Tibial artery (tissue), 4 donors: ENCODE measurements at regions of chr12 and their contacts with region 1.

Region 1: DNA sequence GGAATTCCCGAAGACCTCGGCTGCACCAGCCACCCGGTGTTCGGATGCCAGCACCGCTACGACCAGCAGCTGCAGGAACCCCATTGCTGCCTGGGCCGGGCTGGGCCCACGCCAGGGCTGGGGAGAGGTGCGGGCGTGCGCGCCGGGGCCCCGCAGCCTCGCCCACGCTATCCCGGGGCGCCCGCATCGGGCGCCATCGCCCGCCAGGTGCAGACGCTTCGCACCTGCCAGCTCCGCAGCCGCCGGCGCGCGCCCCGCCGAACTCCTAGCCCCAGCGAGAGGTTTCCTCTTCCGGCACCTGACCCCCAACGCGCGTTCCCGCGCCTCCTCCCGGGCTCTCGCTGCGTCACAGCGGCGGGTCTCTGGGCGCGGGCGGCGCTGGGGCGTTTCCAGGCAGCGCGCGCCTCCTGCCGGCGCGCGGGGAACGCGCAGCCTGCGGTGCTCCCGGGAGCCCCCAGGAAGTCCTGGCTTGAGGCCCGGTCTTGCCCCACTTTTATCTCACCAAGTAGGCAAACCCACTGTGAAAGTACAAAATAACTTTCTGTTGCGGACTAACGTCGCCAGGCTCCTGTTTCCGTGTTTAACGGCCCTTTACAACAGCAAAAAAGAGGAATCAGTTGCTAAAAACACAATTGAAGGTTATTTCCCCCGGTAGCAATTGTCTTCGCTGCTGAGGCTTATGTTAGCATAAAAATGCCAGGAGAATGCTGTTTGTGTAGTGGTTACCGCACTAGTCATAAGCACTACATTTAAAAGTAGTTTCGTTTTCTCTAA is at the start of gene TM7SF3:
- DNase-seq: peak; percentile 94 to 95
- H3K4me3 ChIP-seq: peak within 1 kb of the TSS; percentile 81 to 88
- H3K27ac ChIP-seq: peak within 1 kb of the TSS; percentile 86 to 90
- H3K4me1 ChIP-seq: peaks cover 4 to 54% (median 31%) of the 10 kb centered on the region in 4 donors
- H3K27me3 ChIP-seq: no peaks in the 10 kb centered on the region
- CTCF ChIP-seq: peak; percentile 96 to 97

Region 2: DNA sequence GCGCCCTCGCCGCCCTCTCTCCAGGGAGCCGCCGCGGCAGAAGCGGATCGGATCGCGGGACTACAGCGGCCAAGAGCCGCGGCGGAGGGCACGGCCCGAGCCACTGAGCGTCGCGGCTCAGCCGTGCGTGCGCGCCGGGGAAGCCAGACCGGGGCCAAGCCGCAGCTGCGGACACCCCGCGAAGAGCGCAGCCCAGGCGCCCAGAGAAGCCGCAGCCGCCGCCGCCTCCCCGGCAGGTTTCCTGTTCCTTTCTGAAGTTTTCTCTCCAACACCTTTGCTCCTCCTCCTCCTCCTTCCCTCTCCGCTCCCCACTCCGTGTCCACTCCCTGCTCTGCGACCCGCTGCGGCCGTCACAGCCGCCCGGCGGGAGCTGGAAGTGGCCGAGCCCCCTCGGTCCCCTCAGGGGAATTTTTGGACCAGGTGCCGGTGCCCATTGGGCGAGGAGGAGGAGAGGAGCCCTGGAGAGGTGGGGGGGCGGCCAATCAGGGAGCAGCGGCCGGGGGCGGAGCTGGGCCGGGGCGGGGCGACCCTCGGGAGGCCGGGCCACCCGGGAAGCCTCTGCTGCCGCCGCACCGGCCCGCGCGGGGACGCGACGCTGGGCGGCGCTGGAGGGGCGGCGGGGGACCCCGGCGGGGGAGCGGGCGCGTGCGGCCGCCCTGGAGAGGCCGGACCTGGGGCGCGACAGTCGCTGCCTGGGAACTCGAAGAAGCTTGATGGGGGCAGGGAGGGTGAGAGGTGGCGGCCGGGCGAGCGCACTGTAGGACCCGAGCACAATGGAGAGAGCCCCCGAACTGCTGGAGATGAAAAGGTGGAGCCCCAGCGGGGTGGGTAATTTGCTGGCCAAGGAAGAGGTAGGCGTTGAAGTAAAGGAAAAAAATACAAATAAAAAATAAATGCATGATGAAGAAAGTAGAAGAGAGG is 181.2 kb before region 1 on chr12 and contains the start of gene ITPR2:
- intact Hi-C with region 1: loop called (anchors 10 kb)
- DNase-seq: peak; percentile 94 to 98
- H3K4me3 ChIP-seq: peak within 1 kb of the TSS; percentile 68 to 93
- H3K27ac ChIP-seq: peak within 1 kb of the TSS; percentile 94 to 97
- H3K4me1 ChIP-seq: peaks cover 0 to 16% (median 12%) of the 10 kb centered on the region in 4 donors
- H3K27me3 ChIP-seq: no peaks in the 10 kb centered on the region
- CTCF ChIP-seq: peak in 1 of 2 experiments; percentile 23

Region 3: DNA sequence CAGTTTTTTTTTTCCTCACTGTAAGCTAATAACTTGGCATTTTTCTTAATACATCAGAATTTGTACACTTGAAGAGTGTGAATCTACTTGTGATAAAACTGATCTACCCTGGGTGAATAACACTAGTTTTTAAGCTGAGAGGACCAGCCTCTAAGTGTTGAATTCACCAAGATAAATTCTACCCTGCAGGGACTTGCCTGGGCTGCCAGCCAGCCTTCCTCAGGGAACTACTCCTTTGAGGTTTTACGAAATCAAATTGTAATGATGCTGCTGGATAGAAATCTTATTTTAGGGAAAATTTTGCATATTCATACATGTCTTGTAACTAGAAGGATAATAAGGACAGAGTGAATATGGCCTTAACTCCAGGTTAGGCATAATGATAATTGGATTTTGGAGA is 10.0 kb after region 1 on chr12:
- intact Hi-C with region 1: no loop called
- DNase-seq: no peak
- H3K4me3 ChIP-seq: peak overlapping the region; percentile 70 to 83
- H3K27ac ChIP-seq: no peak overlapping the region
- H3K4me1 ChIP-seq: peaks cover 0 to 32% (median 18%) of the 10 kb centered on the region in 4 donors
- H3K27me3 ChIP-seq: no peaks in the 10 kb centered on the region
- CTCF ChIP-seq: no peak